ENCODE measurements at regions of chr2 and their contacts with region 1.

Region 1: GRCh38 chr2:234500394-234501006 is 3.6 kb upstream of the ARL4C start:
- DNase-seq: peak; percentile 92
- ATAC-seq: peak; percentile 66
- H3K4me3 ChIP-seq: no peak overlapping the region
- H3K4me3 Mint-ChIP-seq: peak overlapping the region; percentile 49
- H3K27ac ChIP-seq: no peak overlapping the region
- H3K27ac Mint-ChIP-seq: peak overlapping the region; percentile 72
- H3K4me1 ChIP-seq: peaks cover 5 to 8% of the 10 kb centered on the region in 2 donors
- H3K4me1 Mint-ChIP-seq: peaks cover 27% of the 10 kb centered on the region
- H3K27me3 ChIP-seq: peaks cover 0 to 14% (median 7%) of the 10 kb centered on the region in 4 experiments
- H3K27me3 Mint-ChIP-seq: peaks cover 28% of the 10 kb centered on the region
- CTCF ChIP-seq: peak; percentile 78

Region 2: DNA sequence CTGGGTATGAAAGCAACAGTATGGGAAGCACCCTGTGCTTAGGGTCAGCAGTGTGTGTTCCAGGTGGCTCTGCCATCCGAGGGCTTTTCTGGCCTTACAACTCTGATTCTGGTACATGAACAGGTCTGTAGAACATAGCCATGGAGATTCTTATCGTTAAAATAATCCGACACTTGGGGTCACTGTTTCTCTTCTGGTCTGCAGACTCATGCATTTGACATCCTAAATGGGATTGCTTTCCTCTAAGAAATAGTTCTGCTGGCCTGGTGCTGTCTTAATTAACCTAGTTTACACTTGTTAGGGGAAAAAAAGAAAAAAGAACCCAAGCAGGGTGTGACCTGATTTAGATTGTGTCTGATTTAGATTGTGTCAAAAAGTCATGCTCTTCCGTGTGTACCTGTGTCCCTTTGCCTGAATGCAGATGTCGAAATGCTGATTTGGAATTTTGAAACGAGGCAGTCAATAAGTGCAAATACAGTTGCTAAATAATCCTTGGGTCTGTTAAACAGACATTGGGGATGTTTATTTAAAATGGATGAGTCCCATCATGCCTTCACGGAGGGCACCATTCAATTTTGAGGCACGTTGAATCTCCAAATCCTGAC is 523.7 kb before region 1 on chr2:
- CTCF ChIA-PET with region 1: interaction called, 15 read pairs
- POLR2A ChIA-PET with region 1: no interaction called
- intact Hi-C with region 1: no loop called
- DNase-seq: peak; percentile 68
- ATAC-seq: no peak
- H3K4me3 ChIP-seq: no peak overlapping the region
- H3K4me3 Mint-ChIP-seq: no peak overlapping the region
- H3K27ac ChIP-seq: no peak overlapping the region
- H3K27ac Mint-ChIP-seq: no peak overlapping the region
- H3K4me1 ChIP-seq: no peaks in the 10 kb centered on the region
- H3K4me1 Mint-ChIP-seq: no peaks in the 10 kb centered on the region
- H3K27me3 ChIP-seq: peaks cover 0 to 20% (median 8%) of the 10 kb centered on the region in 4 experiments
- H3K27me3 Mint-ChIP-seq: peaks cover 61% of the 10 kb centered on the region
- CTCF ChIP-seq: peak; percentile 67

Region 3: GRCh38 chr2:234164493-234165413 is 335.7 kb before region 1 on chr2:
- CTCF ChIA-PET with region 1: interaction called, 16 read pairs
- POLR2A ChIA-PET with region 1: interaction called, 3 read pairs
- intact Hi-C with region 1: loop called (anchors 1 kb)
- DNase-seq: peak; percentile 94
- ATAC-seq: peak; percentile 96
- H3K4me3 ChIP-seq: peak overlapping the region in 2 of 5 experiments; percentile 11 to 40
- H3K4me3 Mint-ChIP-seq: peak overlapping the region; percentile 71
- H3K27ac ChIP-seq: peak overlapping the region; percentile 87 to 88
- H3K27ac Mint-ChIP-seq: peak overlapping the region; percentile 89
- H3K4me1 ChIP-seq: peaks cover 45 to 54% of the 10 kb centered on the region in 2 donors
- H3K4me1 Mint-ChIP-seq: peaks cover 55% of the 10 kb centered on the region
- H3K27me3 ChIP-seq: peaks cover 0 to 8% (median 2%) of the 10 kb centered on the region in 4 experiments
- H3K27me3 Mint-ChIP-seq: peaks cover 9% of the 10 kb centered on the region
- CTCF ChIP-seq: no peak

Region 4: GRCh38 chr2:234308813-234309195 is 191.7 kb before region 1 on chr2:
- CTCF ChIA-PET with region 1: interaction called, 5 read pairs
- POLR2A ChIA-PET with region 1: no interaction called
- intact Hi-C with region 1: loop called (anchors 2 kb)
- DNase-seq: peak; percentile 91
- ATAC-seq: peak; percentile 92
- H3K4me3 ChIP-seq: no peak overlapping the region
- H3K4me3 Mint-ChIP-seq: peak overlapping the region; percentile 44
- H3K27ac ChIP-seq: no peak overlapping the region
- H3K27ac Mint-ChIP-seq: peak overlapping the region; percentile 26
- H3K4me1 ChIP-seq: peaks cover 24 to 26% of the 10 kb centered on the region in 2 donors
- H3K4me1 Mint-ChIP-seq: peaks cover 32% of the 10 kb centered on the region
- H3K27me3 ChIP-seq: peaks cover 0 to 39% (median 8%) of the 10 kb centered on the region in 4 experiments
- H3K27me3 Mint-ChIP-seq: peaks cover 32% of the 10 kb centered on the region
- CTCF ChIP-seq: no peak

Region 5: DNA sequence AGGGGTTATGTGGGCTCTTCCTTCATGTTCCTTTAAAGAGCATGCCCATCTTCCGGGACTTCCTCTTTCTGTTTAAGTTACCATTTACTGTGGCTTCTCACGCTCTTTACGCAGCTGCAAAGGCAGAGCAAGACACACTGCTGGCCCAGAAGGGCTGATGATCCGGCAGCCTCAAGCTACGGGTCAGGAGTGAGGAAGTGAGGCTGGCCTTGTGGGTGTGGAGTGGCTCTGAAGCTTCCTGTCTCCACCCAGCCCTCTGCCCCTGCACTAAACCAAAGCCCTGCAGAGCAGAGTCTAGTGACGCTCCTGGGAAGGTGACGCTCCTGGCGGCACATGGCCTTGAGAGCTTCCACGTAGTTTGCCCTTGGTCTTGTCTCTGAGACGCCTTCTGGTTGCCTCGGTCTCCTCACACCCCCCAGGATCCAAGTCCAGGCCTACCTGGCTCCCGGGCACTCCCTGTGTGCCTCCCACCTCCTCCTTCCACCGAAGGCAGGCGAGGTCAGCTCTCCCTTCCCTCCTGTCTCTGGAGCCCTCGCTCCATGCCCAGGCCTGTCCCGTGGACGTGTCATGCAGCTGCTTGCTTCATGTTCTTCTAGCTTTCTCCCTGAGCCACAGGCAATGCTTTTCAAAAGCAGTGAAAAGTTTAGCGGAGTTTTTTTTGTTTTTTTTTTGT is 54.0 kb before region 1 on chr2:
- CTCF ChIA-PET with region 1: interaction called, 10 read pairs
- POLR2A ChIA-PET with region 1: interaction called, 3 read pairs
- intact Hi-C with region 1: loop called (anchors 1 kb)
- DNase-seq: peak; percentile 95
- ATAC-seq: peak; percentile 93
- H3K4me3 ChIP-seq: peak overlapping the region in 1 of 5 experiments; percentile 11
- H3K4me3 Mint-ChIP-seq: peak overlapping the region; percentile 84
- H3K27ac ChIP-seq: peak overlapping the region; percentile 95 to 98
- H3K27ac Mint-ChIP-seq: peak overlapping the region; percentile 96
- H3K4me1 ChIP-seq: peaks cover 69 to 80% of the 10 kb centered on the region in 2 donors
- H3K4me1 Mint-ChIP-seq: peaks cover 78% of the 10 kb centered on the region
- H3K27me3 ChIP-seq: no peaks in the 10 kb centered on the region
- H3K27me3 Mint-ChIP-seq: no peaks in the 10 kb centered on the region
- CTCF ChIP-seq: no peak

Region 6: DNA sequence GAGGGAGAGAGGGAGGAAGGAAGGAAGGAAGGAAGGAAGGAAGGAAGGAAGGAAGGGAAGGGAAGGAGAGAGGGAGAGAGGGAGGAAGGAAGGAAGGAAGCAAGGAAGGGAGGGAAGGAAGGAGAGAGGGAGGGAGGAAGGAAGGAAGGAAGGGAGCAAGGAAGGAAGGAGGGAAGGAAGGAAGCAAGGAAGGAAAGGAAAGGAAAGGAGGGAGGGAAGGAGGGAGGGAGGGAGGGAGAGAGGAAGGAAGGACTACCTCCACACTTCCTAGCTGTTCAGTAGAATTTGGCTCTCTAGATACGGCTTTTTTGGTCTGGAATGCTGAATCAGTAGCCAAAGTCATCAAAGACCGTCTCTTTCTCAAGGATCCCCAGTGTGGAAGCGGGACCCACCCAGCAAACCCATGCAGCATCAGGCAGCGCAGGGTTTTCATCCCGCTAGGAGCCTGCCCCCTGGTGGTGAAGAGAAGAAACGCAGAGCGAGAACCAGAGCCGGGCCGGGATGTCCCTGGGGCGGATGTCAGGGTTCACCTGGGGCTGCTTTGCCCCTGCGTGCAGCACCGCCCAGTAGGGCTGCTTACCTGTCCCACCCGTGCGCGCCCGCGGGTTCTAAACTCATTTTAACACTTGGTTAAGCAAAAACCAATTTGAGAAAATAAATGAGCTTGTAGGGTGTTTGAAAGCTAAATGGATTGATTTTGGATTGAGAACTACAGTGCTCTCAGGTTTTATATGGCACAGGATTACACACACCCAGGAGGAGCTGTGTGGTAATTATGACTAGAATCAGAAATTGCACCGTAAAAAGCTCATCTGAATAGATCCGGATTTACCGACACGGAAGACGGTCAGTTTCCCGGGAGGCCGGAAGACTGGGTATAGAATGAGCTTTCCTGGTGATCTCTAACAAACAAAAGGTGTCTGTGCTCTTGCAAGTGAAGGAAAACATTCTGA is 44.4 kb after region 1 on chr2:
- CTCF ChIA-PET with region 1: interaction called, 16 read pairs
- POLR2A ChIA-PET with region 1: no interaction called
- intact Hi-C with region 1: no loop called
- DNase-seq: peak; percentile 75
- ATAC-seq: peak; percentile 77
- H3K4me3 ChIP-seq: no peak overlapping the region
- H3K4me3 Mint-ChIP-seq: no peak overlapping the region
- H3K27ac ChIP-seq: no peak overlapping the region
- H3K27ac Mint-ChIP-seq: no peak overlapping the region
- H3K4me1 ChIP-seq: no peaks in the 10 kb centered on the region
- H3K4me1 Mint-ChIP-seq: no peaks in the 10 kb centered on the region
- H3K27me3 ChIP-seq: peaks cover 0 to 8% (median 7%) of the 10 kb centered on the region in 4 experiments
- H3K27me3 Mint-ChIP-seq: peaks cover 61% of the 10 kb centered on the region
- CTCF ChIP-seq: peak; percentile 90

Region 7: GRCh38 chr2:235314371-235314930 is 814.0 kb after region 1 on chr2:
- CTCF ChIA-PET with region 1: no interaction called
- POLR2A ChIA-PET with region 1: no interaction called
- intact Hi-C with region 1: no loop called
- DNase-seq: no peak
- ATAC-seq: no peak
- H3K4me3 ChIP-seq: no peak overlapping the region
- H3K4me3 Mint-ChIP-seq: no peak overlapping the region
- H3K27ac ChIP-seq: no peak overlapping the region
- H3K27ac Mint-ChIP-seq: no peak overlapping the region
- H3K4me1 ChIP-seq: no peaks in the 10 kb centered on the region
- H3K4me1 Mint-ChIP-seq: no peaks in the 10 kb centered on the region
- H3K27me3 ChIP-seq: no peaks in the 10 kb centered on the region
- H3K27me3 Mint-ChIP-seq: peaks cover 7% of the 10 kb centered on the region
- CTCF ChIP-seq: no peak

Measured in B cell (primary cell).